ENCODE measurements at regions of chr16 and their contacts with region 1.

Region 1: DNA sequence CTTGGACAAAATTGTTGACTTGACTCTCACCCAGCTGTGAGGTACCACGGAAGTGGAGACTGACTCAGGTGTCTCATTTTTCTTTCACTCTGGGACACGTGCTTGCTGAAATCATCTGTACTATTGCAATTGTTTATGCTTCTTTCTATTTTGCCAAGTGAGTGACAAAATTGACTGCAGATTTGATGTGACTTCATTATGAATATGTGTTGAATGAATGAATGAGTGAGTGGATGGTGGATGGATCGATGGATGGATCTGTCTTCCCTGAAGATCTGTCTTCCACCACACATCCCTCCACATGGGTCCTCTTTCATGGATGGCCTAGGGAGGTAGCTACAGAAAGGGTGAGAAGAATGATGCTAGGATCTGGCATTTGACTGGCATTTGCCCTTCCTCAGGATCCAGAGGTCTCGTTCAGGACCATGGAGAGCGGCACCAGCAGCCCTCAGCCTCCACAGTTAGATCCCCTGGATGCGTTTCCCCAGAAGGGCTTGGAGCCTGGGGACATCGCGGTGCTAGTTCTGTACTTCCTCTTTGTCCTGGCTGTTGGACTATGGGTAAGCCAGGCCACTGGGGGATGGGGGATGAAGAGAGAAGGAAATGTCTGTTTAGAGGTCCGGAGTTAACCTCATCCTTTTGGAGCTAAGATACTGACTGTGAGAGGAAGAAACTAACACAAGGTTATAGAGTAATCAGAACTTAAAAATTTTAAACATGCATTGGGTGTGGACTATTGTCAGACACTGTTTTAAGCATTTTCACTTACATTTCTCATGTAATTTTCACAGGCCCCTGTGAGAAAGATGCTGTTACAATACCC is 12.7 kb downstream of the SLC5A11 start:
- DNase-seq: peak; percentile 59
- ATAC-seq: peak; percentile 74
- H3K4me3 ChIP-seq: no peak overlapping the region
- H3K27ac ChIP-seq: no peak overlapping the region
- H3K4me1 ChIP-seq: peaks cover 6% of the 10 kb centered on the region
- H3K27me3 ChIP-seq: peaks cover 4% of the 10 kb centered on the region
- CTCF ChIP-seq: no peak
- POLR2A ChIP-seq: no peak
- RAD21 ChIP-seq: no peak

Region 2: GRCh38 chr16:24900230-24900629 is 41.8 kb after region 1 on chr16:
- CTCF ChIA-PET with region 1: interaction called, 5 read pairs
- POLR2A ChIA-PET with region 1: no interaction called
- dilution Hi-C with region 1: no loop called
- in situ Hi-C with region 1: loop called (anchors 5 kb)
- intact Hi-C with region 1: loop called (anchors 5 kb)
- DNase-seq: no peak
- ATAC-seq: no peak
- H3K4me3 ChIP-seq: no peak overlapping the region
- H3K27ac ChIP-seq: no peak overlapping the region
- H3K4me1 ChIP-seq: no peaks in the 10 kb centered on the region
- H3K27me3 ChIP-seq: peaks cover 3% of the 10 kb centered on the region; the same call in 1 of the 2 replicates
- CTCF ChIP-seq: no peak
- POLR2A ChIP-seq: no peak
- RAD21 ChIP-seq: no peak

Region 3: GRCh38 chr16:24906199-24907020 is 48.0 kb after region 1 on chr16:
- CTCF ChIA-PET with region 1: interaction called, 5 read pairs
- POLR2A ChIA-PET with region 1: no interaction called
- dilution Hi-C with region 1: no loop called
- in situ Hi-C with region 1: loop called (anchors 5 kb)
- intact Hi-C with region 1: loop called (anchors 5 kb)
- DNase-seq: peak; percentile 26
- ATAC-seq: peak; percentile 29
- H3K4me3 ChIP-seq: no peak overlapping the region
- H3K27ac ChIP-seq: no peak overlapping the region
- H3K4me1 ChIP-seq: no peaks in the 10 kb centered on the region
- H3K27me3 ChIP-seq: no peaks in the 10 kb centered on the region; the same call in 1 of the 2 replicates
- CTCF ChIP-seq: peak; percentile 48
- POLR2A ChIP-seq: no peak
- RAD21 ChIP-seq: peak; percentile 41; the same call in 1 of the 2 replicates

Region 4: GRCh38 chr16:24988593-24989338 is 130.3 kb after region 1 on chr16:
- CTCF ChIA-PET with region 1: no interaction called
- POLR2A ChIA-PET with region 1: no interaction called
- dilution Hi-C with region 1: no loop called
- in situ Hi-C with region 1: no loop called
- intact Hi-C with region 1: no loop called
- DNase-seq: peak; percentile 76
- ATAC-seq: peak; percentile 12
- H3K4me3 ChIP-seq: no peak overlapping the region
- H3K27ac ChIP-seq: peak overlapping the region; percentile 90
- H3K4me1 ChIP-seq: peaks cover 41% of the 10 kb centered on the region
- H3K27me3 ChIP-seq: no peaks in the 10 kb centered on the region
- CTCF ChIP-seq: no peak
- POLR2A ChIP-seq: peak; percentile 27; the same call in 1 of the 2 replicates
- RAD21 ChIP-seq: no peak

Region 5: GRCh38 chr16:25031441-25032307 is 173.2 kb after region 1 on chr16:
- CTCF ChIA-PET with region 1: no interaction called
- POLR2A ChIA-PET with region 1: no interaction called
- dilution Hi-C with region 1: no loop called
- in situ Hi-C with region 1: no loop called
- intact Hi-C with region 1: loop called (anchors 5 kb)
- DNase-seq: peak; percentile 96
- ATAC-seq: peak; percentile 96
- H3K4me3 ChIP-seq: peak overlapping the region; percentile 80
- H3K27ac ChIP-seq: peak overlapping the region; percentile 71
- H3K4me1 ChIP-seq: peaks cover 12% of the 10 kb centered on the region
- H3K27me3 ChIP-seq: no peaks in the 10 kb centered on the region
- CTCF ChIP-seq: no peak
- POLR2A ChIP-seq: 0 out of 2 replicates have a peak, but pooled peaks have one; percentile 53
- RAD21 ChIP-seq: no peak

Measured in IMR-90 (cell line).